ENCODE measurements at regions of chr11 and their contacts with region 1.

Region 1: GRCh38 chr11:57741132-57742086 is at the start of gene SELENOH:
- DNase-seq: peak; percentile 95 to 99
- H3K4me3 ChIP-seq: peak within 1 kb of the TSS; percentile 76 to 99 (median 92)
- H3K27ac ChIP-seq: peak within 1 kb of the TSS; percentile 83
- H3K4me1 ChIP-seq: peaks cover 0 to 9% (median 3%) of the 10 kb centered on the region in 4 experiments; a peak in 4 of 7 replicates
- H3K27me3 ChIP-seq: no peaks in the 10 kb centered on the region
- CTCF ChIP-seq: peak in 1 of 3 experiments; percentile 5; a peak in 1 of 4 replicates
- EP300 ChIP-seq: peak in 1 of 2 experiments; percentile 97; a peak in 2 of 3 replicates
- POLR2A ChIP-seq: peak; percentile 88 to 98
- RAD21 ChIP-seq: peak; percentile 18 to 19; a peak in 3 of 4 replicates
- total RNA-seq, gene SELENOH: 242 and 243 TPM in 2 replicates

Region 2: DNA sequence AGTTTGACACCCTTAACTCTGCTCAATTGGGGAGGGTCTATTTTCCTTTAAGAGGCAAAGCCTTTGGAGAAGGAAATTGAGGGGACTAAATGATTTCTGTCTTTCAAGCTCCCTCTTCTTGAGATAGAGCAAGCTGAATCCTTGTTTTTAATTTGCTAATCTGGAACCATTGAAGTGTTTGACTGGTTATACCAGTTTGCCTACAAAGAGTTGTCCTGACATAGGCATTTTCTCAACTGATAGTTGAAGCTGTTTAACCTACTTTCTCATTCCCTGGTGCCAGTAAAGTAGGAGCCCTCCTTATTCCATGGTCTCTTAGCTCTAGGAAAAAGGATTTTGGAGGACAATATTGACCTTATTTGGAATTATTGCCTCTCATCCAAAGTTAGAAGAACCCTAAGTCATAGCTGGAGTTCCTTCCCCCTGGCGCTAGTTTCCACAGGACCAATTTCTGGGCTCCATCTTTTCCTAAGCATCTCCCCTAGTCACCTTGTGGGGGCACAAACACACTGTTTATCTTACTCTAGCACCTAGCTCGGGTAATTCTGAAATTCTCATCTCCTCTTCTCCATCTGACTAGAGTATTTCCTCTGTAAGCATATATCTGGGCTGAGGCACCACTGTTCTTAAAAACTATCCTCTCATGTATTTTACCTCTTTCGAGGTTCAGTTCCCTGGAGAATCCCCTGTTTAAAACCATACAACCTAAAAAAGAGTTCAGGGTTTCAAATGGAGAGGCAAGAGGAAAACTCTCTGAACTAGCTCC is 66.0 kb before region 1 on chr11:
- CTCF ChIA-PET with region 1: no interaction called
- POLR2A ChIA-PET with region 1: interaction called, 11 read pairs
- DNase-seq: no peak
- H3K4me3 ChIP-seq: no peak overlapping the region
- H3K27ac ChIP-seq: no peak overlapping the region
- H3K4me1 ChIP-seq: peaks cover 0 to 2% (median 0%) of the 10 kb centered on the region in 4 experiments; a peak in 2 of 7 replicates
- H3K27me3 ChIP-seq: no peaks in the 10 kb centered on the region
- CTCF ChIP-seq: no peak
- EP300 ChIP-seq: no peak
- POLR2A ChIP-seq: no peak
- RAD21 ChIP-seq: peak in 1 of 2 experiments; percentile 22; a peak in 1 of 4 replicates

Region 3: GRCh38 chr11:57712256-57713150 is 28.9 kb before region 1 on chr11 and contains the start of gene TMX2:
- CTCF ChIA-PET with region 1: no interaction called
- POLR2A ChIA-PET with region 1: interaction called, 22 read pairs
- DNase-seq: peak; percentile 82 to 90
- H3K4me3 ChIP-seq: peak within 1 kb of the TSS; percentile 91 to 100 (median 98)
- H3K27ac ChIP-seq: peak within 1 kb of the TSS; percentile 94
- H3K4me1 ChIP-seq: peaks cover 0 to 4% (median 0%) of the 10 kb centered on the region in 4 experiments; a peak in 1 of 7 replicates
- H3K27me3 ChIP-seq: no peaks in the 10 kb centered on the region
- CTCF ChIP-seq: no peak
- EP300 ChIP-seq: no peak
- POLR2A ChIP-seq: peak; percentile 80 to 87
- RAD21 ChIP-seq: no peak
- total RNA-seq, gene TMX2: 100.0 and 104 TPM in 2 replicates

Region 4: GRCh38 chr11:57751676-57752253 is 10.4 kb after region 1 on chr11 and contains the start of gene BTBD18:
- CTCF ChIA-PET with region 1: interaction called, 21 read pairs
- POLR2A ChIA-PET with region 1: interaction called, 22 read pairs
- DNase-seq: peak in 1 of 2 experiments; percentile 54
- H3K4me3 ChIP-seq: no peak within 1 kb of the TSS
- H3K27ac ChIP-seq: no peak within 1 kb of the TSS; the same call in 1 of the 2 replicates
- H3K4me1 ChIP-seq: no peaks in the 10 kb centered on the region; a peak in 1 of 7 replicates
- H3K27me3 ChIP-seq: no peaks in the 10 kb centered on the region
- CTCF ChIP-seq: peak in 2 of 3 experiments; percentile 58 to 61; a peak in 3 of 4 replicates
- EP300 ChIP-seq: no peak
- POLR2A ChIP-seq: no peak
- RAD21 ChIP-seq: peak; percentile 62 to 78
- total RNA-seq, gene BTBD18: not detected in 2 replicates

Region 5: DNA sequence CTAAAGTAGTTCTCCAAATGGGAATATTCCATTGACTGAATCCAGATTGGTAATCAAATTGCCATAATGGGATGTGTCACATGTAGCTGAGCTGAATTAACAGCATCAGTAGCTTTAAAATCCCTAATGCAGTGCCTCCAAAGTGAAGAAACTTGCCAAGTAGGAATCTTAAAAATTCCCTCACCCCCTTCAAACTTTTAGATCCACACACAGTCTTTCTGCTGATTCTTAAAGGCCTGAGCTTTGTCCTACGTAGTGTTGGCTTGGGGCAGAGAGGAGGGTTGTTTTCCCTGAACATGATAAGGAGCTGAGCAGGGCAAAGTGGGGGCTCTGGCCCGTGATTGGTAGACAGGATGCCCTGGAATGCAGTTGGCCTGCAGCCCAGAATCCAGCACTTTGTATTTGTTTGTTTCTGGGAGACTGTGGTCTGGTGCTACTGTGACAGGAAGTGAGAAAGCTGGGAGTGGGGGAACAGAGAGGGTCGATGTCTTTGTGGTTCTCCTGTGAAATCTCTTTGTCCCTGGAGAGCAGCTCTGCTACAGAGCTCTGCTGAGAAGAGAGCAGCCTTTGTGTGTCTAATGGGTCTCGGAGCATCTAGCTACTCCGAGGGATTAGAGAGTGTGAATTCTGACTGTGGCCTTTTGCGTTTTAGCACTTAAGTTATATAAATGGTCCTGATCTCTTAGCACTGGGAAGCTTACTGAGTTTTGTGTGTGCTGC is 37.1 kb after region 1 on chr11:
- CTCF ChIA-PET with region 1: interaction called, 3 read pairs
- POLR2A ChIA-PET with region 1: interaction called, 12 read pairs
- DNase-seq: peak; percentile 71 to 79
- H3K4me3 ChIP-seq: peak overlapping the region in 3 of 4 experiments; percentile 5 to 39 (median 16); a peak in 4 of 8 replicates
- H3K27ac ChIP-seq: peak overlapping the region; percentile 89
- H3K4me1 ChIP-seq: peaks cover 23 to 44% (median 38%) of the 10 kb centered on the region in 4 experiments
- H3K27me3 ChIP-seq: no peaks in the 10 kb centered on the region
- CTCF ChIP-seq: no peak
- EP300 ChIP-seq: 0 out of 3 replicates have a peak, but pooled peaks of 1 of the 2 experiments have one; percentile 19
- POLR2A ChIP-seq: peak; percentile 83 to 91
- RAD21 ChIP-seq: peak in 1 of 2 experiments; percentile 0; a peak in 1 of 4 replicates

Region 6: DNA sequence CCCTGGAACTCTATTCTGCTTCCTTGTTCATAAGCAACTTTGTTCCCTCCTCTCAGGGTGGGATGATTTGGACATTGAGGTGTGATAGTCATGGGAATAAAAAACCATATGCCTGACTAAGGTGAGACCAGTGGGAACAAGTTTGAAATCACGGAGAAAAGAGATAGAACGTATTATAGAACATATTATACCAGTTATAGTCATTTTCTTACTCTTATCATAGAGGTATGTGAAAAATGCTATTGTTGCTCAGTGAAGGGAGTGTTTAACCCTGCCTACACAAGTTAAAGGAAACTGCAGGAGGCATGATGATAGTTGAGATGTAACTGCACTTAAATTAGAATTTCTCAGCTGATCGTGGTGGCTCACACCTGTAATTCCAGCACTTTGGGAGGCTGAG is 304.8 kb after region 1 on chr11:
- CTCF ChIA-PET with region 1: no interaction called
- POLR2A ChIA-PET with region 1: no interaction called
- DNase-seq: no peak
- H3K4me3 ChIP-seq: no peak overlapping the region
- H3K27ac ChIP-seq: no peak overlapping the region
- H3K4me1 ChIP-seq: no peaks in the 10 kb centered on the region
- H3K27me3 ChIP-seq: no peaks in the 10 kb centered on the region
- CTCF ChIP-seq: no peak
- EP300 ChIP-seq: no peak
- POLR2A ChIP-seq: no peak
- RAD21 ChIP-seq: no peak